Esophagus muscularis mucosa (tissue), 4 donors: ENCODE measurements at regions of chr3 and their contacts with region 1.

Region 1: DNA sequence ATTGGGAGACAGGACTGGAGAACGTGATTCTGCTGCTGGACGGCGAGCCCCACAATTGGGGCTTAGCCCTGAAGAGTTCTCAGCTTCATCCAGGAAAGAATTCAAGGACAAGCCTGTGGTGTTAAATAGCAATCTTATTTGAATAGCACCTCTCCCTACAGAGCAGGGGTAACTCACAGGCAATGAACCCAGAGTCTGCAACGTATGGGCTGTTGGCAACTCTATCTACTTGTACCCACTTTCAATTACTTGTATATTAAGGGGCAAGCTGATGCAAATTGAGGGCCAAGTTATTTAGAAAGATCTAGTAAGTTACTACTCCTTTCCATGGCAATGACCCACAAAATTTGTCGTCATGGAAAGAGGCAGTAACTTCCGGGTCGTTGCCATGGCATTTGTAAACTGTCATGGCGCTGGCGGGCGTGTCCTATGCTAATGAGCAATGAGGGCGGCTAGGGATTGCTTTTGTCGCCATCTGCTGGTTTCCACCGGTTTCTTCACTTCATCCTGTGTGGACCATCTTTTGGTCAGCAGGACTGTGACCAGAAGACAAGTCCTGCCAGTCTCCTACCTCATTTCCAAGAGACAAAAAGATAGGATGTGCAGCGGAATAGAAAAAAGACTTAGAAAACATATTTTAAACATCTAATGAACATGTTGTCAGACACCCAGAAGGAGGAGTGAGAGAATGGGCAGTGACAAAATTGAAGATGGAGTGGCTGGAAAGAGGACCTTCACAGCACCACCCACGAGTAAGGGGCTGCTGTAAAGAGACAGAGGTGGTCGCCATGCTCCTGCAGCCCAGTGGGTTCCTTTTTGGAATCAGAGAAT is 45.8 kb upstream of the SH3BP5 start:
- DNase-seq: peak; percentile 98
- H3K4me3 ChIP-seq: peak overlapping the region in 1 of 4 donors; percentile 11
- H3K27ac ChIP-seq: peak overlapping the region in 2 of 4 donors; percentile 36 to 37
- H3K4me1 ChIP-seq: peaks cover 0 to 5% (median 2%) of the 10 kb centered on the region in 4 donors
- H3K27me3 ChIP-seq: no peaks in the 10 kb centered on the region
- CTCF ChIP-seq: peak; percentile 69 to 87 (median 86)
- EP300 ChIP-seq: no peak
- POLR2A ChIP-seq: no peak

Region 2: GRCh38 chr3:15332405-15333098 is 45.6 kb before region 1 on chr3 and contains the start of gene SH3BP5:
- intact Hi-C with region 1: loop called (anchors 5 kb)
- DNase-seq: no peak
- H3K4me3 ChIP-seq: peak within 1 kb of the TSS; percentile 65 to 94 (median 76)
- H3K27ac ChIP-seq: peak within 1 kb of the TSS; percentile 78 to 87 (median 82)
- H3K4me1 ChIP-seq: peaks cover 19 to 49% (median 48%) of the 10 kb centered on the region in 4 donors
- H3K27me3 ChIP-seq: no peaks in the 10 kb centered on the region
- CTCF ChIP-seq: peak; percentile 71 to 91 (median 77)
- EP300 ChIP-seq: no peak
- POLR2A ChIP-seq: peak; percentile 48
- total RNA-seq, gene SH3BP5: 26.2 to 56.5 (median 38.2) TPM

Region 3: DNA sequence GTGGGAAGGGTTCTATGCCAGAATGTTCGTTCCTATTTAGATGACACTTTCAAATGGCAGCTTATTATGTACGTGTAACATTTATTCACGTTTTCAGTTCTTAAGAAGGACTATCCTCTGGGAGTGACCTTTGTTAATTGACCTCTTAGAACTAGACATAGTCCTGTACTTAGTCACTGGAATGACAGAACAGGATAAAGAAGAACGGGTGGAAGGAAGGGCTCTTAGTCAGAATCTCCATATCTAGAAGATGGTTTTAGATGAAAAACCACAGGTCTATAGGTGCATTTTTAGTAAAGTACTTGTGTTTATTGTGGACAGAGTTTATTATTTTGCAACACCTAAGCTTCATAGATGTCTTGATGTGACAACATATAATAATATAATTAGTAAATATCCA is 42.7 kb after region 1 on chr3:
- intact Hi-C with region 1: no loop called
- DNase-seq: no peak
- H3K4me3 ChIP-seq: no peak overlapping the region
- H3K27ac ChIP-seq: no peak overlapping the region
- H3K4me1 ChIP-seq: peaks cover 4 to 13% (median 10%) of the 10 kb centered on the region in 4 donors
- H3K27me3 ChIP-seq: no peaks in the 10 kb centered on the region
- CTCF ChIP-seq: no peak
- EP300 ChIP-seq: no peak
- POLR2A ChIP-seq: no peak